ENCODE measurements at regions of chr2 and their contacts with region 1.

Region 1: DNA sequence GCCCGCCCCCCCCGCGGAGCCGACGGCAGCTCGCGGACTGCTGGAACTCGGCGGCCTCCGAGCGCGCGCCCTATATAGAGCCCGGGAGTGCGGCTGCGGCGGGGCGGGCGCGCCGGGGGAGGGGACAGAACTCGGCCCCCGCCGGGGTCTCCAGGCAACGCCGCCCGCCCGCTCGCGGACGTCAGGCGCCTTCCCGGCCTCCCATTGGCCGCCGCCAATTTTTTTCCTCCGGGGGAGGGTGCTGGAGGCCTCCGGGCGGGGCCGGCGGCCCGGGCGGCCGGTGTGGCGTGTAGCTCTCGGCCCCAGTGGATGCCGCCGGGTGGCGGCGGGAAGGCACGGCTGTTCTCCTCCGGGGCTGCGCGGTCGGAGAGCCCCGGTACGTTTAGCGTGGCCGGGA is at the start of gene ZFP36L2:
- DNase-seq: peak; percentile 98
- ATAC-seq: peak; percentile 54
- H3K4me3 ChIP-seq: peak within 1 kb of the TSS; percentile 88
- H3K27ac ChIP-seq: peak within 1 kb of the TSS; percentile 98
- H3K4me1 ChIP-seq: peaks cover 32% of the 10 kb centered on the region
- H3K27me3 ChIP-seq: no peaks in the 10 kb centered on the region
- CTCF ChIP-seq: no peak
- total RNA-seq, gene ZFP36L2: 14.8 and 26.0 TPM in 2 replicates

Region 2: GRCh38 chr2:41933585-41934320 is 1292.8 kb before region 1 on chr2:
- CTCF ChIA-PET with region 1: no interaction called
- POLR2A ChIA-PET with region 1: no interaction called
- intact Hi-C with region 1: no loop called
- DNase-seq: peak; percentile 67
- ATAC-seq: no peak
- H3K4me3 ChIP-seq: no peak overlapping the region
- H3K27ac ChIP-seq: no peak overlapping the region
- H3K4me1 ChIP-seq: peaks cover 65% of the 10 kb centered on the region
- H3K27me3 ChIP-seq: no peaks in the 10 kb centered on the region
- CTCF ChIP-seq: no peak

Region 3: DNA sequence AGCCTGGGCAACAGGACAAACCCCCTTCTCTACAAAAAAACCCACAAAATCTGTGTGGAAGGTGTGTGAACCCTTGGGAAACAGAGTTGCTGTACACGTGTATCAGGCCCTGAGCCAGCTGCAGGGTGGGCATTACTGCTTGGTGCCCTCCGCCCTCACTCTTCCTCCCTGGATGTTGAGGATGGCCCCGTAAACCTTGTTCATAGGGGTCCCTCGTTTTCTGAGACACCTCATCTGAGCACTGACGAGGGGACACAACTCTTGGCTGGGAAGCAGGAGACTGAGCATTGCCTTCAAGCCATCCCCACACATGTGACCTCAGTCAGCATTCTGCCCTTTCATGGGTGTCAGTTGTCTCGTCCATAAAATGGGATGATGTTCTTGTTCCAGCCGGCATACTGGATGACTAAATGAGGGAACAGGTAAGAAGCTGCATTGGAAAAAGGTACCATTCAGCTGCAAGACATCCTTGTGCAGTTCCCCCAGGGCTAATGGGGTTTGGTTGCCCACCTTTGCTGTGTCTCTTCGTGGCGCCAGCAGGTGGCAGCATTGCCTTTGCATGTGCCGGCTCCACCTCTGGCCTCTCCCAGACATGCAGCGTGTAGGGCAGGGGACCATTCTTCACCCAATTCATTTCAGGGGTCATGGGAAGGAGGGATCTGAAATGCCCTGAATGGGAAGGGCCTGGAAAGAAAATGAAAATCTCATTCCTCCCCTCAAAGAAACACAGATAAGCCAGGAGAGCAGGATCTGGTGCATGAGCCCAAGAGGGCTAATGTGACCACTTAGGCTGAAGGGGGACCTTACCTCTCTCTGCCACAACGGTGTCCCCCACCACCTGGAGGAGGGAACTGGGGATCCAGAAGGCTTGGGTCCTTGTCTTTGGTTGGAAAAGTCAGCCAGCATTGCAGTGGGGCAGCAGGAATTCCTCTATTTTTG is 397.8 kb before region 1 on chr2:
- CTCF ChIA-PET with region 1: no interaction called
- POLR2A ChIA-PET with region 1: no interaction called
- intact Hi-C with region 1: loop called (anchors 10 kb)
- DNase-seq: peak; percentile 76
- ATAC-seq: peak; percentile 75
- H3K4me3 ChIP-seq: no peak overlapping the region
- H3K27ac ChIP-seq: no peak overlapping the region
- H3K4me1 ChIP-seq: peaks cover 12% of the 10 kb centered on the region
- H3K27me3 ChIP-seq: no peaks in the 10 kb centered on the region
- CTCF ChIP-seq: peak; percentile 93

Region 4: GRCh38 chr2:42944779-42945415 is 281.7 kb before region 1 on chr2:
- CTCF ChIA-PET with region 1: no interaction called
- POLR2A ChIA-PET with region 1: no interaction called
- intact Hi-C with region 1: loop called (anchors 1 kb)
- DNase-seq: peak; percentile 66
- ATAC-seq: peak; percentile 64
- H3K4me3 ChIP-seq: no peak overlapping the region
- H3K27ac ChIP-seq: no peak overlapping the region
- H3K4me1 ChIP-seq: no peaks in the 10 kb centered on the region
- H3K27me3 ChIP-seq: no peaks in the 10 kb centered on the region
- CTCF ChIP-seq: no peak

Region 5: DNA sequence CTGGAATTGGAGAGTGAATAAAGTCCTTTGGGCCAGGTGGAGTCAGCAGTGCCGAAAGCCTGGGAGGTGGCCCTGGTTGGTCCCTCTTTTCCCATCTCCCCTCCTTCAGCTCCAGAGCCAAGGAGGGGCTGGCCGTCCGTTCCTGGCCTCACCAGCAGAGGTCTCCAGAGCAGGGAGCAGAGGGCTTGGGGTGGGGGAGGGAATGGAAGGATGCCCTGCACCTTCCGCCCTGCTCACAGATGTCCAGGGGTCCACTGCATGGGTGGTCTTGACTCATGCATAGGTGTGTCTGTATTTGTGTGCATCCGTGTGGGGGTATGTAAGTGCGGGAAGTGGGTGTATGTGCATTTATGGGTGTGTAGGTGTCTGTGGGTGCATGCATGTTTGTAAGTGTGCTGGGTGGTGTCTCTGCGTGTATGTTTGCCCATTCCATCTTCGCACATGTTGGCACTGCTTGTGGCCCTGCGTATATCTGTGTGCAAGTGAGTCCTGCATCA is 202.0 kb before region 1 on chr2:
- CTCF ChIA-PET with region 1: interaction called, 12 read pairs
- POLR2A ChIA-PET with region 1: interaction called, 3 read pairs
- intact Hi-C with region 1: loop called (anchors 1 kb)
- DNase-seq: peak; percentile 69
- ATAC-seq: peak; percentile 85
- H3K4me3 ChIP-seq: no peak overlapping the region
- H3K27ac ChIP-seq: no peak overlapping the region
- H3K4me1 ChIP-seq: 0 out of 2 replicates have a peak, but pooled peaks cover 3% of the 10 kb centered on the region
- H3K27me3 ChIP-seq: no peaks in the 10 kb centered on the region
- CTCF ChIP-seq: peak; percentile 77

Region 6: DNA sequence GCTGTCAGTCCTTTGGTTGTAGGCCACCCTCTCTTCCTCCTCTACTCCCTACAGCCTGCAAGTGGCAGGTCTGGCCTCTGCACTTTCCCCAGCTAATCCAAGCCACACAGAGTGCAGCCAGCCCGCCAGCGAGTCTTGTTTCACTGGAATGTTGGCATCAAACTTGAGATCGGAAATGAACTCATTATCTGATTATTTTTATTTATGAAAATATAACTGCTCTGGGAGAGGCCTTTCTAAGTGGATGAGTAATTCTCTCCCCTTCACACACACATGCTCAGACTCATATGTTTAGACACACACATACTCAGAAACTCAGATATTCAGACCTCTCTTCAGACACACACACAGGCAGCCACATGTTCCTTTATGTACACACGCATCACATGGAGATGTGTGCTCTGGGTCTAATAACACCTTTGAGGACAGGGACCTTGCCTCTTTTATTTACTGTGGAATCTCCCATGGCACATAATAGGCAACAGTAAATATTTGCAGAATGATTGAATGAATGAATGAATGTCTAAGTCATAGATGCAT is 151.4 kb before region 1 on chr2:
- CTCF ChIA-PET with region 1: no interaction called
- POLR2A ChIA-PET with region 1: no interaction called
- intact Hi-C with region 1: loop called (anchors 10 kb)
- DNase-seq: peak; percentile 97
- ATAC-seq: peak; percentile 88
- H3K4me3 ChIP-seq: no peak overlapping the region
- H3K27ac ChIP-seq: peak overlapping the region; percentile 98
- H3K4me1 ChIP-seq: peaks cover 64% of the 10 kb centered on the region
- H3K27me3 ChIP-seq: no peaks in the 10 kb centered on the region
- CTCF ChIP-seq: no peak

Region 7: DNA sequence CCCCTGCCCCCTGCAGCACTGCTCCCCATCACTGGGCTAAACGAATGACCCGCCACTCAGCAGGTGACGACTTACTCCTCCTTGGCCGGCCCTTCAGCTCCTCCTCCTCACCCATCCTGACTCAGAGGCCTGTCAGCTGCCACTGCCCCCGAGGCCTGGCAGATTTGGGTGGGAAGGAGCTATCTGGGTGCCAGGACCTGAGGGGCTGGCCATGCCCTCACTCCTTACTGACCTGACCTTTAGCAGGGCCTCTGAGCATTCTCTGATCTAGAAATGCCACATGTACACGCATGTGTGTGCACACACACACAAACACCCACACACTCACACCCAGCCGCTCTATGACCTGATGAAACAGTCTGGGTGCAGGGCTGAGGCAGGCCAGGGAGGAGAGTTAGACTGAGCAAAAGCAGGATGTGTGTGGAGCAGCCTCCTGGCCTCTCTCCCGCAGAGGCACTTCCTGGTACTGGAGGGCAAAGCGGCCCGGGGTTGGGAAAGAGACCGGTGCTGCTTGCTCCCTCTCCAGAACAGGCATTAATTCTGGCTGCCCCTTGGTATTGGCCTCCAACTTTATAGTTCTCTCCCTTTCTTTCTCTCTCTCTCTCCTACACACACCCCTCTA is 68.2 kb before region 1 on chr2:
- CTCF ChIA-PET with region 1: no interaction called
- POLR2A ChIA-PET with region 1: no interaction called
- intact Hi-C with region 1: loop called (anchors 2 kb)
- DNase-seq: peak; percentile 86
- ATAC-seq: peak; percentile 74
- H3K4me3 ChIP-seq: peak overlapping the region; percentile 26; the same call in 1 of the 2 replicates
- H3K27ac ChIP-seq: peak overlapping the region; percentile 97
- H3K4me1 ChIP-seq: peaks cover 33% of the 10 kb centered on the region
- H3K27me3 ChIP-seq: no peaks in the 10 kb centered on the region
- CTCF ChIP-seq: no peak

Region 8: DNA sequence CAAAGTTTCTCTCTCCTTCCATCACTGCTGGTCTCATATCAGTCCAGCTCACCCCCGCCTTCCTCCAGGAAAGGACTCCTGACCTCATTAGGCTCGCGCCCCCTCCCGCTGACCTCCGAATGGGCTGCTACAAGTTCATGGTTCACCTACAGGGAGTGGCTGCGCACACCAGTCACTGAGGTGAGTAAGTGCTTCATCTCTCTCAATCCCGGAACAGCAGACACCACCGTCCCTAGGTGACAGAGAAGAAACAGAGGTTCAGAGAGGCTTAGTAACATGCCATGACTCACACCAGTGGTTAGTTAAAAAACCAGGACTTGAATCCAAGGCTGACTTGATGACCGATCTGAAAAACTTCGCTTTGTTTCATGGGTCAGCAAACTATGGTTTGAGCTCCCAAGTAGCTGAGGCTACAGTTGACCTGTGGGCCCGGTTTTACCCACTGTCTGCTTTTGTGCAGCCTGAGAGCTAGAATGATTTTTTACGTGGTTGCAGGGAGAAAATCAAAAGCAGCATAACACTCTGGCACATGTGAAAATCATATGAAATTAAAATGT is 42.1 kb before region 1 on chr2:
- CTCF ChIA-PET with region 1: no interaction called
- POLR2A ChIA-PET with region 1: no interaction called
- intact Hi-C with region 1: no loop called
- DNase-seq: peak; percentile 96
- ATAC-seq: peak; percentile 87
- H3K4me3 ChIP-seq: no peak overlapping the region
- H3K27ac ChIP-seq: peak overlapping the region; percentile 81
- H3K4me1 ChIP-seq: peaks cover 37% of the 10 kb centered on the region
- H3K27me3 ChIP-seq: no peaks in the 10 kb centered on the region
- CTCF ChIP-seq: no peak

Region 9: GRCh38 chr2:43255296-43255910 is 28.8 kb after region 1 on chr2:
- CTCF ChIA-PET with region 1: no interaction called
- POLR2A ChIA-PET with region 1: no interaction called
- intact Hi-C with region 1: no loop called
- DNase-seq: peak; percentile 6
- ATAC-seq: no peak
- H3K4me3 ChIP-seq: no peak overlapping the region
- H3K27ac ChIP-seq: no peak overlapping the region
- H3K4me1 ChIP-seq: no peaks in the 10 kb centered on the region
- H3K27me3 ChIP-seq: no peaks in the 10 kb centered on the region
- CTCF ChIP-seq: no peak

Region 10: GRCh38 chr2:43542285-43542937 is 315.9 kb after region 1 on chr2:
- CTCF ChIA-PET with region 1: no interaction called
- POLR2A ChIA-PET with region 1: no interaction called
- intact Hi-C with region 1: loop called (anchors 2 kb)
- DNase-seq: peak; percentile 73
- ATAC-seq: peak; percentile 56
- H3K4me3 ChIP-seq: no peak overlapping the region
- H3K27ac ChIP-seq: no peak overlapping the region
- H3K4me1 ChIP-seq: peaks cover 25% of the 10 kb centered on the region
- H3K27me3 ChIP-seq: no peaks in the 10 kb centered on the region
- CTCF ChIP-seq: peak; percentile 70

Measured in PC-3 (cell line).